ENCODE measurements at regions of chrX and their contacts with region 1.

Region 1: GRCh38 chrX:106611679-106612392 is at the start of gene RADX:
- DNase-seq: peak; percentile 89
- H3K4me3 Mint-ChIP-seq: peak within 1 kb of the TSS; percentile 87
- H3K27ac Mint-ChIP-seq: peak within 1 kb of the TSS; percentile 85
- H3K4me1 Mint-ChIP-seq: peaks cover 14% of the 10 kb centered on the region
- H3K27me3 Mint-ChIP-seq: no peaks in the 10 kb centered on the region
- total RNA-seq, gene RADX: 13.1 to 14.8 TPM

Region 2: GRCh38 chrX:106588801-106589200 is 23.0 kb before region 1 on chrX:
- CTCF ChIA-PET with region 1: interaction called, 3 read pairs
- intact Hi-C with region 1: loop called (anchors 1 kb)
- DNase-seq: no peak
- H3K4me3 Mint-ChIP-seq: no peak overlapping the region
- H3K27ac Mint-ChIP-seq: no peak overlapping the region
- H3K4me1 Mint-ChIP-seq: peaks cover 7% of the 10 kb centered on the region
- H3K27me3 Mint-ChIP-seq: no peaks in the 10 kb centered on the region

Region 3: DNA sequence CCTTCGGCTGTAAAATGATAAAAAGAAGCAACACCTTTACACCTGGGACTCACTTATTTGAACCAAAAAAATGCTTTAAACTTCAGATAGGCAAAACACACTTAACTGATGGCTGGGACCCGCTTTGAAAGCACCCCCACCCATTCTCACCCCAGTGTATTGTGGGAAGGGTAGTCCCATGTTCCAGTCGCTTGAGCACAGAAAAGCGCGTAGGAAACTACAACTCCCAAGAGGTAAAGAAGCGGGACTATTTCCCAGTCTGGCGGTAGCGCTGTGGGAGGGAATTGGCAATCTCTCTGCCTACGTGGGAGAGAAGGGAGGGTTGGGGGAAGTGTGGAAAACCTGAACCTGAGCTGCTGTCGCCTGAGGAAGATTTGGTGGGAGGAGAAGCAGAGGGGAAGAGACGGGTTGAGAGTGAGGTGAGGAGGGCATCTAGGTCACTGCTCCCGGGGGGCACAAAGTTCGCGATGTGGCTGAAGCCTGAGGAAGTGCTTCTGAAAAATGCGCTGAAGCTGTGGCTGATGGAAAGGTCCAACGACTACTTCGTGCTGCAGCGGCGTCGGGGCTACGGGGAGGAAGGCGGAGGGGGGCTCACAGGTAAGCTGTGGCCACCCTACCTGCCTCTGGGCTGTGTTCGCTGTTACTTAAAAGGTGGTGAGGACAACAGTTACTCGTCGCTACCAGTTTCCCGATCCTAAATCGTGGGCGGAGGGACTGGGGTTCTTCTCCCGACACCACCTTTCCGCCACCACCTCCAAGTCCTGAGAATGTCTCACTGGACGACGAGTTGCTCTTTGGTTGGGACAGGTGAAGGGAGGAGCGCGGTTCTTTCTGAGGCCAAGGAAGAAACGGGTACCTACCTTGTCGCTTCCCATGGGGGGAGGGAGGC is 190.8 kb after region 1 on chrX and contains the start of gene TBC1D8B:
- CTCF ChIA-PET with region 1: no interaction called
- intact Hi-C with region 1: loop called (anchors 2 kb)
- DNase-seq: peak; percentile 35
- H3K4me3 Mint-ChIP-seq: peak within 1 kb of the TSS; percentile 91
- H3K27ac Mint-ChIP-seq: peak within 1 kb of the TSS; percentile 66
- H3K4me1 Mint-ChIP-seq: peaks cover 5% of the 10 kb centered on the region
- H3K27me3 Mint-ChIP-seq: peaks cover 22% of the 10 kb centered on the region
- total RNA-seq, gene TBC1D8B: 1.2 TPM

Region 4: GRCh38 chrX:107454302-107454701 is 842.5 kb after region 1 on chrX:
- CTCF ChIA-PET with region 1: no interaction called
- intact Hi-C with region 1: loop called (anchors 5 kb)
- DNase-seq: peak; percentile 59
- H3K4me3 Mint-ChIP-seq: no peak overlapping the region
- H3K27ac Mint-ChIP-seq: no peak overlapping the region
- H3K4me1 Mint-ChIP-seq: peaks cover 14% of the 10 kb centered on the region
- H3K27me3 Mint-ChIP-seq: peaks cover 32% of the 10 kb centered on the region

Measured in activated naive CD4-positive, alpha-beta T cell treated with anti-CD3 and anti-CD28 coated beads for 36 hours (primary cell).